GM12878 (cell line): ENCODE measurements at regions of chr14 and their contacts with region 1.

Region 1: GRCh38 chr14:93381644-93382043 is 34.7 kb downstream of the COX8C start:
- DNase-seq: no peak
- ATAC-seq: peak; percentile 76
- H3K4me3 ChIP-seq: no peak overlapping the region
- H3K27ac ChIP-seq: no peak overlapping the region
- H3K4me1 ChIP-seq: no peaks in the 10 kb centered on the region
- H3K27me3 ChIP-seq: no peaks in the 10 kb centered on the region
- CTCF ChIP-seq: 0 out of 6 replicates have a peak, but pooled peaks of 1 of the 3 experiments have one; percentile 13
- EP300 ChIP-seq: no peak
- POLR2A ChIP-seq: no peak
- RAD21 ChIP-seq: peak; percentile 54

Region 2: DNA sequence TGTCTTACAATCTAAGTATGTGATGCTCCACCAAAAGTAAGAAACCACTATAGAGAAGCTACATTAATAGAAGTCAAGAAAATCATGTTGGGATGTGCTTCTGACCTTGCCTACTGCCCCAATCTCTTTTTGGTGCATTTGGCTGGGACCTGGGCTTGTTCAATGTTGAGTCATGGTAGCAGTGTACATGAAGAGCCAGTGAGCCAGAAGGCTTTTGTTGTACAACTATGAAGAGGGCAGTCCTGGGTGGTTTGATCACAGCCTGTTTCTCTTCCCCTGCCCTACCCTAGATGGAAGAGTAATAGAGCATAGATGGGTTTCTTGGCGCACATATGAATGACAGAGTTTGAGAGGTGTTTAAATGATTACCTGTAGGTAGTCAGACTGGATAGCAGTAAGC is 118.2 kb before region 1 on chr14:
- CTCF ChIA-PET with region 1: no interaction called
- POLR2A ChIA-PET with region 1: no interaction called
- RAD21 ChIA-PET with region 1: no interaction called
- SMC1A ChIA-PET with region 1: no interaction called
- in situ Hi-C with region 1: no loop called
- intact Hi-C with region 1: no loop called
- DNase-seq: no peak
- ATAC-seq: no peak
- H3K4me3 ChIP-seq: no peak overlapping the region
- H3K27ac ChIP-seq: no peak overlapping the region
- H3K4me1 ChIP-seq: no peaks in the 10 kb centered on the region
- H3K27me3 ChIP-seq: no peaks in the 10 kb centered on the region
- CTCF ChIP-seq: no peak
- EP300 ChIP-seq: no peak
- POLR2A ChIP-seq: no peak
- RAD21 ChIP-seq: no peak

Region 3: DNA sequence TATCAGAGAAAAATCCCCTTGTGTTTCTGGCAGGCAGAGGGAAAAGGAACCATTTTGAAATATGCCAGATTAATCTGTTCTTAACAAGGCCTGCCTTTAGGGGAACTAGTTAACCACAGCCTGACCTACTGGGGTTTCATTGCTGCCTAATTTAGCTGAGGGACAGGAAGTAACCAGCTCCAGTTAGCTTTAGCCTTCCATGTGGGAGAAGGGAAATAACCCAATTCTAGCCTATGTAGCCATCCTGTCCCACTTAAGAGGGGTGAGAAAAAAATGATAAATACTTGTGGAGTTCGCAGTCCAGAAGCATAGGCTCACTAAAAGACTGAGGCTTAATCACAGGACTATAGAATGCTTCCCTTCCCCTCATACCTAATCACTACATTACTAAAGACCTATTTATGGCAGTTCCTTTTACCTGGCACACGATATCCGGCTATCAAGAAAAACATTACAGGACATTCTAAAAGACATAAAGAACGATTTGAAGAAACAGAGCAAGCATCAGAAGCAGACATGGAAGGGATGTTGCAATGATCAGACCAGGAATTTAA is 11.9 kb before region 1 on chr14:
- CTCF ChIA-PET with region 1: interaction called, 4 read pairs
- POLR2A ChIA-PET with region 1: interaction called, 5 read pairs
- RAD21 ChIA-PET with region 1: interaction called, 4 read pairs
- SMC1A ChIA-PET with region 1: interaction called, 24 read pairs
- in situ Hi-C with region 1: no loop called
- intact Hi-C with region 1: no loop called
- DNase-seq: peak; percentile 85
- ATAC-seq: peak; percentile 96
- H3K4me3 ChIP-seq: peak overlapping the region; percentile 2; the same call in 1 of the 2 replicates
- H3K27ac ChIP-seq: peak overlapping the region; percentile 91
- H3K4me1 ChIP-seq: peaks cover 22% of the 10 kb centered on the region
- H3K27me3 ChIP-seq: no peaks in the 10 kb centered on the region
- CTCF ChIP-seq: no peak
- EP300 ChIP-seq: peak in 1 of 2 experiments; percentile 42; a peak in 2 of 4 replicates
- POLR2A ChIP-seq: no peak
- RAD21 ChIP-seq: no peak

Region 4: DNA sequence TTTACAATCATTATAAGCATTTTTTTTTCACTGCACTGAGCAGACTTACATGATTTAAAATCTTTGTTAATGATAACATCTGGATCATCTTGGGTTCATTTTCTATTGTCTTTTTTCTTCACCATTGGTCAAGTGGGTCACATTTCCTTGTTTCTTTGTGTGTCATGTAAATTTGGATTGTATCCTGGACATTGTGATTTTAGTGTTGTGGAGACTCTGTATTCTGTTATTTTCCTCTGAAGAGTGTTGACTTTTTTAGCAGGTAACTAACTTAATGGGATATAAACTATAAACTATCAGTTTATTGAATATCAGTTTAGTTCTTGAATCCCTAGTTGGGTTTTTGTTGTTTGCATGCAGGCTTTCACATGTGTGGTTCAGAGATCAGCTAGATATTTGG is 45.1 kb after region 1 on chr14:
- CTCF ChIA-PET with region 1: no interaction called
- POLR2A ChIA-PET with region 1: no interaction called
- RAD21 ChIA-PET with region 1: no interaction called
- SMC1A ChIA-PET with region 1: no interaction called
- in situ Hi-C with region 1: no loop called
- intact Hi-C with region 1: no loop called
- DNase-seq: no peak
- ATAC-seq: no peak
- H3K4me3 ChIP-seq: no peak overlapping the region
- H3K27ac ChIP-seq: no peak overlapping the region
- H3K4me1 ChIP-seq: no peaks in the 10 kb centered on the region
- H3K27me3 ChIP-seq: peaks cover 0 to 5% of the 10 kb centered on the region in 2 experiments; a peak in 2 of 4 replicates
- CTCF ChIP-seq: no peak
- EP300 ChIP-seq: no peak
- POLR2A ChIP-seq: no peak
- RAD21 ChIP-seq: no peak

Region 5: GRCh38 chr14:93471083-93471482 is 89.4 kb after region 1 on chr14:
- CTCF ChIA-PET with region 1: no interaction called
- POLR2A ChIA-PET with region 1: no interaction called
- RAD21 ChIA-PET with region 1: no interaction called
- SMC1A ChIA-PET with region 1: no interaction called
- in situ Hi-C with region 1: no loop called
- intact Hi-C with region 1: no loop called
- DNase-seq: no peak
- ATAC-seq: no peak
- H3K4me3 ChIP-seq: no peak overlapping the region
- H3K27ac ChIP-seq: no peak overlapping the region
- H3K4me1 ChIP-seq: no peaks in the 10 kb centered on the region
- H3K27me3 ChIP-seq: no peaks in the 10 kb centered on the region
- CTCF ChIP-seq: no peak
- EP300 ChIP-seq: no peak
- POLR2A ChIP-seq: no peak
- RAD21 ChIP-seq: no peak